GM12878 (cell line): ENCODE measurements at regions of chr7 and their contacts with region 1.

Region 1: DNA sequence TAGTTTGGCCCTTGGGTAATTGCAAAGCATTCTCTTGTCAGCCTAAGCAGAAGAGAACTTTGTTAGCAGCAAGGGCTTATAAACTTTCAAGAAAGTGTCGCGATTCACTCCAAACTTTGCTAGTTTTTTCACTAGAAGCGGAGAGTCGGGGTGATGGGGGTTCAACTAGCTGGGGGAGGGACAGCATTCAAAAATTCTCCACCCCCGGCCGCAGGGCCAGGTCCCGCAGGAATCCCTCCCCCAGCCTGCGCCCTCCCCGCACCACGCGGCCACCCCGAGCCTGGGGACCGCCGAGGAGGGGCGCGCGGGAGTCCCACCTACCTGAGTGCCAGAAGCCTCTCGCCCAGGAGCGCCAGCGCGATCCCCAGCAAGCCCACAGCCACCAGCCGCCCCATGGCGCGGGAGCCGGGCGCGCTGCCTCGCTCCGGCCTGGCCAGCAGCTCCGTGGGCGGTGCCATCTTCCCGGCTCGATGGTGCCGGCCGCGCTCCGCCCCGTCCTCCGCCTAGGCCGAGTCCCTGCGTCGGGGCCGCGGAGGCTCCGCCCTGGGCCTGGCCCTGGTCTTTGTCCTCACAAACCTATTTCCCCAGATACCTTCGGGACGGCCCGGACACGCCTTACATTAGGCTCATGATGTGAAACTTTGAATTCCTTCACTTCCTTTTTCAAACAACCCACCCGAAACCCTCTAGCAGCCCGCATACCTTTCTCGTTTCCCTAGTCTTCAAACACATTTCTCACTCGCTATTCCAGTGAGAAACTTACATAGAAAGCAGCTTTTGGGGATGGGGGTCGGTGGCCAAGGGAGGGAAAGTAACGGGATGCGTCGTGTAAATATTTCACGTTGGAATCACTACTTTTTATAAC is at the start of gene PON2:
- DNase-seq: peak; percentile 55
- ATAC-seq: peak; percentile 96
- H3K4me3 ChIP-seq: peak within 1 kb of the TSS; percentile 56
- H3K27ac ChIP-seq: no peak within 1 kb of the TSS
- H3K4me1 ChIP-seq: no peaks in the 10 kb centered on the region
- H3K27me3 ChIP-seq: no peaks in the 10 kb centered on the region
- CTCF ChIP-seq: no peak
- EP300 ChIP-seq: peak in 1 of 2 experiments; percentile 57; a peak in 1 of 4 replicates
- POLR2A ChIP-seq: peak; percentile 55; the same call in 1 of the 2 replicates
- RAD21 ChIP-seq: no peak
- polyA plus RNA-seq, gene PON2: 22.9 to 30.2 TPM

Region 2: GRCh38 chr7:95421000-95421846 is 13.6 kb before region 1 on chr7:
- CTCF ChIA-PET with region 1: interaction called, 10 read pairs
- POLR2A ChIA-PET with region 1: interaction called, 8 read pairs
- RAD21 ChIA-PET with region 1: interaction called, 21 read pairs
- SMC1A ChIA-PET with region 1: interaction called, 20 read pairs
- in situ Hi-C with region 1: no loop called
- intact Hi-C with region 1: no loop called
- DNase-seq: no peak
- ATAC-seq: peak; percentile 83
- H3K4me3 ChIP-seq: no peak overlapping the region
- H3K27ac ChIP-seq: no peak overlapping the region
- H3K4me1 ChIP-seq: no peaks in the 10 kb centered on the region
- H3K27me3 ChIP-seq: no peaks in the 10 kb centered on the region
- CTCF ChIP-seq: no peak
- EP300 ChIP-seq: no peak
- POLR2A ChIP-seq: no peak
- RAD21 ChIP-seq: no peak

Region 3: GRCh38 chr7:95446618-95447017 is 11.8 kb after region 1 on chr7:
- CTCF ChIA-PET with region 1: interaction called, 22 read pairs
- POLR2A ChIA-PET with region 1: interaction called, 9 read pairs
- RAD21 ChIA-PET with region 1: interaction called, 11 read pairs
- SMC1A ChIA-PET with region 1: interaction called, 14 read pairs
- in situ Hi-C with region 1: no loop called
- intact Hi-C with region 1: loop called (anchors 2 kb)
- DNase-seq: no peak
- ATAC-seq: no peak
- H3K4me3 ChIP-seq: no peak overlapping the region
- H3K27ac ChIP-seq: no peak overlapping the region
- H3K4me1 ChIP-seq: no peaks in the 10 kb centered on the region
- H3K27me3 ChIP-seq: no peaks in the 10 kb centered on the region
- CTCF ChIP-seq: no peak
- EP300 ChIP-seq: no peak
- POLR2A ChIP-seq: no peak
- RAD21 ChIP-seq: no peak

Region 4: DNA sequence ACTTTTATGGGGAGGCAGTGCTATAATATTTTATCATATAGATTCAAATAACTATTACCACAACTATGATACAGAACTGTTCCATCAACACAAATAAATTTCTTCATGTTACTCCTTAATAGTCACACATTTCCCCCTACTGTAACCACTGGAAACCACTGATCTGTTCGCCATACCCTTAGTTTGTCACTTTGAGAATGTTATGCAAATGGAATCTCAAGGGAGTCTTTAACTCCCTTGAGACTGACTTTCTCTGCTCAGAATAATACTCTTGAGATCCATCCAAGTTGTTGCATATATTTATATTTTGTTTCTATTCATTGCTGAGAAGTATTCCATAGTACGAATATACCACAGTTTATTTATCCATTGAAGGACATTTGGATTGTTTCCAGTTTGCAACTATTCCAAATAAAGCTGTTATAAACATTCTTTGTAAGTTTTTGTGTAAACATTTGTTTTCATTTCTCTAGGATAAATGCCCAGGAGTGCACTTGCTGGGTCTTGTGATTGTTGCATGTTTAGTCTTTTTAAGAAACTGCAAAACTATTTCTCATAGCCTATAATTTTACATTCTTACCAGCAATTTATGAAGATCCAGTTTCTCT is 19.8 kb after region 1 on chr7:
- CTCF ChIA-PET with region 1: interaction called, 5 read pairs
- POLR2A ChIA-PET with region 1: interaction called, 7 read pairs
- RAD21 ChIA-PET with region 1: interaction called, 11 read pairs
- SMC1A ChIA-PET with region 1: interaction called, 14 read pairs
- in situ Hi-C with region 1: no loop called
- intact Hi-C with region 1: loop called (anchors 2 kb)
- DNase-seq: no peak
- ATAC-seq: peak; percentile 63
- H3K4me3 ChIP-seq: no peak overlapping the region
- H3K27ac ChIP-seq: no peak overlapping the region
- H3K4me1 ChIP-seq: no peaks in the 10 kb centered on the region
- H3K27me3 ChIP-seq: no peaks in the 10 kb centered on the region
- CTCF ChIP-seq: no peak; a peak in 1 of 6 replicates
- EP300 ChIP-seq: peak in 1 of 2 experiments; percentile 39; a peak in 1 of 4 replicates
- POLR2A ChIP-seq: no peak
- RAD21 ChIP-seq: peak; percentile 21; the same call in 1 of the 2 replicates

Region 5: DNA sequence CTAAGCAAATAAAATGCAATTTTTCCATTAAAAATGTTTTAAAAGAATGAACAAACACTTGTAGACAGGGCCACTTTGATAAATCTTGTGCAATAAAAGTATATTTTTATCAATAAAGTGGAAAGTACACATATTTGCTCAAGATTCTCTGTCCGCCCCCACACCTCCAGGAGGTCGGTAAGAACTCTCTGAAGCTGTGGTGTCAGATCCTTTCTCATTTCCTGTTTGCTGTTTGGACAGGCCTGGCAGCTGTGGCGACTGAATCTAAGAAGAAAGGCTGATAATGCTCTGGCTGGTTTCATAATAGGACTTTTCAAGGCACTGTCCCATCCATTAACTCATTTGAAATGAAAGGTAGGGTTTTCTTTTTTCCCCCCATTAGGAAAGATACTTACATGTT is 35.7 kb after region 1 on chr7:
- CTCF ChIA-PET with region 1: interaction called, 19 read pairs
- POLR2A ChIA-PET with region 1: interaction called, 5 read pairs
- RAD21 ChIA-PET with region 1: interaction called, 36 read pairs
- SMC1A ChIA-PET with region 1: interaction called, 21 read pairs
- in situ Hi-C with region 1: no loop called
- intact Hi-C with region 1: loop called (anchors 1 kb)
- DNase-seq: no peak
- ATAC-seq: peak; percentile 99
- H3K4me3 ChIP-seq: no peak overlapping the region
- H3K27ac ChIP-seq: no peak overlapping the region
- H3K4me1 ChIP-seq: no peaks in the 10 kb centered on the region; the same call in 1 of the 2 replicates
- H3K27me3 ChIP-seq: no peaks in the 10 kb centered on the region
- CTCF ChIP-seq: no peak
- EP300 ChIP-seq: no peak
- POLR2A ChIP-seq: no peak
- RAD21 ChIP-seq: no peak

Region 6: GRCh38 chr7:95501261-95501832 is 66.6 kb after region 1 on chr7:
- CTCF ChIA-PET with region 1: interaction called, 3 read pairs
- POLR2A ChIA-PET with region 1: interaction called, 4 read pairs
- RAD21 ChIA-PET with region 1: no interaction called
- SMC1A ChIA-PET with region 1: interaction called, 7 read pairs
- in situ Hi-C with region 1: no loop called
- intact Hi-C with region 1: loop called (anchors 2 kb)
- DNase-seq: peak; percentile 87
- ATAC-seq: peak; percentile 78
- H3K4me3 ChIP-seq: peak overlapping the region; percentile 34; the same call in 1 of the 2 replicates
- H3K27ac ChIP-seq: peak overlapping the region; percentile 56
- H3K4me1 ChIP-seq: peaks cover 8% of the 10 kb centered on the region
- H3K27me3 ChIP-seq: no peaks in the 10 kb centered on the region
- CTCF ChIP-seq: no peak
- EP300 ChIP-seq: peak; percentile 96 to 97
- POLR2A ChIP-seq: no peak
- RAD21 ChIP-seq: no peak

Region 7: GRCh38 chr7:95628831-95629439 is 194.1 kb after region 1 on chr7:
- CTCF ChIA-PET with region 1: no interaction called
- POLR2A ChIA-PET with region 1: no interaction called
- RAD21 ChIA-PET with region 1: no interaction called
- SMC1A ChIA-PET with region 1: no interaction called
- in situ Hi-C with region 1: no loop called
- intact Hi-C with region 1: no loop called
- DNase-seq: no peak
- ATAC-seq: no peak
- H3K4me3 ChIP-seq: no peak overlapping the region
- H3K27ac ChIP-seq: no peak overlapping the region
- H3K4me1 ChIP-seq: no peaks in the 10 kb centered on the region
- H3K27me3 ChIP-seq: no peaks in the 10 kb centered on the region
- CTCF ChIP-seq: no peak
- EP300 ChIP-seq: no peak
- POLR2A ChIP-seq: no peak
- RAD21 ChIP-seq: no peak

Region 8: GRCh38 chr7:96017877-96018276 is 583.1 kb after region 1 on chr7:
- CTCF ChIA-PET with region 1: no interaction called
- POLR2A ChIA-PET with region 1: no interaction called
- RAD21 ChIA-PET with region 1: no interaction called
- SMC1A ChIA-PET with region 1: no interaction called
- in situ Hi-C with region 1: no loop called
- intact Hi-C with region 1: no loop called
- DNase-seq: no peak
- ATAC-seq: no peak
- H3K4me3 ChIP-seq: no peak overlapping the region
- H3K27ac ChIP-seq: no peak overlapping the region
- H3K4me1 ChIP-seq: no peaks in the 10 kb centered on the region
- H3K27me3 ChIP-seq: peaks cover 0 to 2% of the 10 kb centered on the region in 2 experiments; a peak in 3 of 4 replicates
- CTCF ChIP-seq: no peak
- EP300 ChIP-seq: no peak
- POLR2A ChIP-seq: no peak
- RAD21 ChIP-seq: no peak